ENCODE measurements at regions of chrX and their contacts with region 1.

Region 1: DNA sequence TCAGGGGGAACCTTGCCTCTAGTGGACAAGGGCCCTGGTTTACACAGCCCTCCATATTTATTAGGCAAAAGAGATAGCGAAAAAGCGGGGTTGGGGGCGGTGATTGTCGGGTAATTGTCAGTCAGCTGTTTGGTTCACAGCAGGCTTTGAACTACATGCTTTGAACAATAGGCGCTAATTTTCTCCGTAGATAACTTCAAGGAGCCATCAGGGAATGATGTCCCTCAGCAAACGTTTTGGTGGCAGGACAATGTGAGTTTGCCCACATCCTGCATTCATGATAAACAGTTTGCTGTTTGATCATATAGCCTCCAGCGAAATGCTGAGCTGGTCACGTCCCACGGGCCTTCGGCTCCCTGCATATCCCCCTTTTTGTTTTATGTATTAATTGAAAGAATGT is 65.2 kb downstream of the KANTR start:
- DNase-seq: no peak
- ATAC-seq: no peak
- H3K4me3 ChIP-seq: no peak overlapping the region
- H3K27ac ChIP-seq: no peak overlapping the region
- H3K4me1 ChIP-seq: no peaks in the 10 kb centered on the region
- H3K27me3 ChIP-seq: no peaks in the 10 kb centered on the region
- CTCF ChIP-seq: no peak

Region 2: DNA sequence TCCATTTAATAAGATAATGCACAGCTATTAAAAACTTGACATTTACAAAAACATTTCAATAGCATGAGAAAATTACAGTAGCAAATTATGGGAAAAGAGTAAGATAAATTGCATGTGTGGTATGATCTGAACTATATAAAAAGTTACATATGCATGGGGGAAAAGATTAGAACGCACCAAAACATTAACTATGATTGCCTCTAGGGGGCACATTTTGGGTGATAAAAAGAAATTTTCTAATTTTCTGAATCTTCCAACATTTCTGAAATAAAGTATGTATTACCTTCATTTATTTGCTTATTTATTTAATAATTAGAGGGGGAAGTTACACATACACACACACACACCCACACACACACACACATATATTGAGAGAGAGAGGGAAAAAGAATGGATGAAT is 85.4 kb after region 1 on chrX:
- CTCF ChIA-PET with region 1: no interaction called
- POLR2A ChIA-PET with region 1: interaction called, 10 read pairs
- in situ Hi-C with region 1: no loop called
- intact Hi-C with region 1: no loop called
- DNase-seq: no peak
- ATAC-seq: no peak
- H3K4me3 ChIP-seq: no peak overlapping the region
- H3K27ac ChIP-seq: no peak overlapping the region
- H3K4me1 ChIP-seq: no peaks in the 10 kb centered on the region
- H3K27me3 ChIP-seq: no peaks in the 10 kb centered on the region
- CTCF ChIP-seq: peak; percentile 28; the same call in 1 of the 2 replicates

Measured in Panc1 (cell line).